ENCODE measurements at regions of chr5 and their contacts with region 1.

Region 1: DNA sequence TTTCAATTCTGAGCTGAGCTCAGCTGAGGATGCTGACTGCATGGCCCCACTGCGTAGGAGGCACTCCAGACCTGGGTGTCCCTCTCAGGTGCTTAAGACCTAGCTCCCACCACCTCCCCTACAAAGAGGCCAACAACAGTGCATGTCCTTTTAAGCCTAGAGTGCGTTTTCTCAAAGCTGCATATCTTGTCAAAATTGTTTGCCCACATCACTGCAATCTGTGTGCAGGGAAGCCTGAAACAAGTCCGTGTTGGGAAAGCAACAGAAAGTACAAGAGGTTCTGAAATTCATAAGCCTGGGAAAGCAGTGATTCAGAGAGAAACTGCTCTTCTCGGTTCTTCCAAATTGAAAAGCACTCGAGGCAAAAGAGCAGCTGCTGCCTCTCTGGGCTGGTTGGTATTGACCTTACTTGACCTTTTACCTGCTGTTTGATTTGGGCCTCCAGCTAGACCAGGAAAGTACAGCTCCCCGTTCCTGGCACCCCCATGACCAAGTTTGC is 238.4 kb downstream of the NR2F1-AS1 start:
- DNase-seq: no peak
- H3K4me3 ChIP-seq: no peak overlapping the region
- H3K27ac ChIP-seq: no peak overlapping the region
- H3K4me1 ChIP-seq: no peaks in the 10 kb centered on the region
- H3K27me3 ChIP-seq: no peaks in the 10 kb centered on the region
- CTCF ChIP-seq: no peak
- POLR2A ChIP-seq: no peak

Region 2: GRCh38 chr5:93322974-93323860 is 19.4 kb before region 1 on chr5:
- intact Hi-C with region 1: loop called (anchors 2 kb)
- DNase-seq: no peak
- H3K4me3 ChIP-seq: no peak overlapping the region
- H3K27ac ChIP-seq: no peak overlapping the region
- H3K4me1 ChIP-seq: no peaks in the 10 kb centered on the region
- H3K27me3 ChIP-seq: no peaks in the 10 kb centered on the region
- CTCF ChIP-seq: no peak
- POLR2A ChIP-seq: no peak

Region 3: DNA sequence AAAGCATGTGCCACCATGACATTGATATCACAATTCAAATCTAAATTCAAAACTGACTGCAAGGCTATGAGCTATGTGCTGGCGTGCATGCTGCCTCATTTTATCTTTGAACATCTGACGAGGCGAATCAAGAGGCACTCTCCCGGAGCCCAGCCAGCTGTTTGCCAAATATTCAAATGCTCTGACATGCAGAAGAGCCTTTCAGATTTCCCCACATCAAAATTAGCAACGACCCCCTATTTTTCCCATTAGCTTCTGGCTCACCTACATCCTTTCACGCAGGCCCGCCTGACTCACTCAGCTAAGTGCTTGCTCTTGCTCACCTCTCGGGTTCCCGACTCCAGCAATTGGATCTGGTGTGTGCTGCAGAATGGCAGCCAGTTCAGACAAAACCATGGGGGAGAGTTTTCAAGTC is 79.4 kb after region 1 on chr5:
- intact Hi-C with region 1: no loop called
- DNase-seq: no peak
- H3K4me3 ChIP-seq: no peak overlapping the region
- H3K27ac ChIP-seq: no peak overlapping the region
- H3K4me1 ChIP-seq: peaks cover 10% of the 10 kb centered on the region
- H3K27me3 ChIP-seq: no peaks in the 10 kb centered on the region
- CTCF ChIP-seq: no peak
- POLR2A ChIP-seq: no peak

Region 4: GRCh38 chr5:94009161-94009560 is 666.5 kb after region 1 on chr5:
- intact Hi-C with region 1: no loop called
- DNase-seq: no peak
- H3K4me3 ChIP-seq: no peak overlapping the region
- H3K27ac ChIP-seq: no peak overlapping the region
- H3K4me1 ChIP-seq: no peaks in the 10 kb centered on the region
- H3K27me3 ChIP-seq: no peaks in the 10 kb centered on the region
- CTCF ChIP-seq: no peak
- POLR2A ChIP-seq: no peak

Measured in vagina (tissue), 2 donors.